Activated CD8-positive, alpha-beta T cell treated with anti-CD3 and anti-CD28 coated beads for 36 hours (primary cell): ENCODE measurements at regions of chr3 and their contacts with region 1.

Region 1: GRCh38 chr3:16511681-16512434 is 1.6 kb downstream of the RFTN1 start:
- DNase-seq: peak; percentile 95
- ATAC-seq: peak; percentile 69
- H3K4me3 Mint-ChIP-seq: peak overlapping the region; percentile 98
- H3K27ac Mint-ChIP-seq: peak overlapping the region; percentile 90
- H3K4me1 Mint-ChIP-seq: peaks cover 67% of the 10 kb centered on the region
- H3K27me3 Mint-ChIP-seq: no peaks in the 10 kb centered on the region
- CTCF ChIP-seq: no peak

Region 2: GRCh38 chr3:16300881-16301359 is 210.9 kb before region 1 on chr3:
- CTCF ChIA-PET with region 1: interaction called, 3 read pairs
- POLR2A ChIA-PET with region 1: interaction called, 20 read pairs
- intact Hi-C with region 1: no loop called
- DNase-seq: peak; percentile 69
- ATAC-seq: peak; percentile 64
- H3K4me3 Mint-ChIP-seq: peak overlapping the region; percentile 73
- H3K27ac Mint-ChIP-seq: peak overlapping the region; percentile 95
- H3K4me1 Mint-ChIP-seq: peaks cover 94% of the 10 kb centered on the region
- H3K27me3 Mint-ChIP-seq: no peaks in the 10 kb centered on the region
- CTCF ChIP-seq: no peak

Region 3: DNA sequence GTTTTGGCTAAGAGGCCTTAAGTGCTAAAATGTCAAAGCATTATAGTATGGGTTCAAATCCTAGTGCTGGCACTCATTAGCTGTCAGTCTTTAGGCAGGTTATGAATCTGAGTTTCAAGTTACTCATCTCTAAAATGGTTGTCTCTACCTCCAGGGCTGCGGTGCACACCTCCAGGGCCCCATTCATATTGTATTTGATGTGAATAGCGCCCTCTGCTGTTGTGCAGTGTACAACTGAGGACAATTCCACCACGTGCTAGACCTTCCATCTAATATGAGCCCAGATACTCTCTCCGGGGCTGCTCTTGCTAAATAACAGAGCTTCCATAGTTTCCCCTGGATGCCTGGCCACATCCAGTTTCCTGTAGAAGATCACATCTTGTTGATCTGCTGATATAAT is 192.6 kb before region 1 on chr3:
- CTCF ChIA-PET with region 1: interaction called, 9 read pairs
- POLR2A ChIA-PET with region 1: interaction called, 21 read pairs
- intact Hi-C with region 1: loop called (anchors 5 kb)
- DNase-seq: peak; percentile 97
- ATAC-seq: peak; percentile 92
- H3K4me3 Mint-ChIP-seq: peak overlapping the region; percentile 21
- H3K27ac Mint-ChIP-seq: peak overlapping the region; percentile 96
- H3K4me1 Mint-ChIP-seq: peaks cover 78% of the 10 kb centered on the region
- H3K27me3 Mint-ChIP-seq: no peaks in the 10 kb centered on the region
- CTCF ChIP-seq: peak; percentile 69

Region 4: GRCh38 chr3:16462679-16463078 is 49.2 kb before region 1 on chr3:
- CTCF ChIA-PET with region 1: no interaction called
- POLR2A ChIA-PET with region 1: interaction called, 6 read pairs
- intact Hi-C with region 1: loop called (anchors 5 kb)
- DNase-seq: peak; percentile 47
- ATAC-seq: peak; percentile 81
- H3K4me3 Mint-ChIP-seq: peak overlapping the region; percentile 0
- H3K27ac Mint-ChIP-seq: peak overlapping the region; percentile 70
- H3K4me1 Mint-ChIP-seq: peaks cover 65% of the 10 kb centered on the region
- H3K27me3 Mint-ChIP-seq: no peaks in the 10 kb centered on the region
- CTCF ChIP-seq: no peak

Region 5: GRCh38 chr3:16482770-16483531 is 28.9 kb before region 1 on chr3:
- CTCF ChIA-PET with region 1: no interaction called
- POLR2A ChIA-PET with region 1: interaction called, 12 read pairs
- intact Hi-C with region 1: no loop called
- DNase-seq: peak; percentile 71
- ATAC-seq: peak; percentile 90
- H3K4me3 Mint-ChIP-seq: peak overlapping the region; percentile 17
- H3K27ac Mint-ChIP-seq: peak overlapping the region; percentile 89
- H3K4me1 Mint-ChIP-seq: peaks cover 79% of the 10 kb centered on the region
- H3K27me3 Mint-ChIP-seq: no peaks in the 10 kb centered on the region
- CTCF ChIP-seq: no peak

Region 6: DNA sequence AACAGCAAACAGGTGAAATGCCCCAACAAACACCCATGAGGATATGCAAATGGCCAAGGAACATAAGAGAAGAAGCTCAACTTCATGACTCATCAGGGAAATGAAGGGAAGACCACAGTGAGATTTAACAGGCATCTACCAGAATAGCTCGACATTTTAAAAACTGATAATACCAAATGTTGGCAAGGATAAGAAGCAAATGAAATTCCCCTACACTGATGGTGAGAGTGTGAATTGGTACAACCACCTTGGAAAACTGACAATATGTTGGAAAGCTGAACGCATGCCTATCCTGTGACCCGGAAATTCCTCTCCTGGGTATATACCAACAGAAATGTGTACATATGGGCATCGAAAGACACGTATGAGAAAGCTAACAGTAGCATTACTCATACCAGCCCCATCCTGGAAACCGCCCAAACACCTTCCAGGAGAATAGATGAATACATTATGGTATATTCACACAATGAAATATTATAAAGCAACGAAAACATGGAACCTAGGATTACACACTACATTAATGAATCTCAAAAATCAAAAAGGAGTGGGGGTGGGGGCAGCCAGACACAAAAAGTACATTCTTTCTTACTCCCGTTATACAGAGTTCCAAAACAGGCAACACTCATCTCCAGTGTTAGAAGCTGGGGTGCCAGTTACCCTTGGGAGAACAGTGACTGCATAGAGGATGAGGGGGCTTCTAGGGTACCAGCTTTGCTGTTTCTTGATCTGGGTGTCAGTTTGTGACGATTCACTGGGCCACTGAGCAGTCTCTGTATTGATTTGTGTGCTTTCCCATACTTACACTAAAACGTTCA is 15.2 kb before region 1 on chr3:
- CTCF ChIA-PET with region 1: interaction called, 6 read pairs
- POLR2A ChIA-PET with region 1: interaction called, 24 read pairs
- intact Hi-C with region 1: no loop called
- DNase-seq: no peak
- ATAC-seq: peak; percentile 57
- H3K4me3 Mint-ChIP-seq: no peak overlapping the region
- H3K27ac Mint-ChIP-seq: peak overlapping the region; percentile 44
- H3K4me1 Mint-ChIP-seq: peaks cover 63% of the 10 kb centered on the region
- H3K27me3 Mint-ChIP-seq: no peaks in the 10 kb centered on the region
- CTCF ChIP-seq: no peak

Region 7: GRCh38 chr3:16550676-16551341 is 39.0 kb after region 1 on chr3:
- CTCF ChIA-PET with region 1: interaction called, 6 read pairs
- POLR2A ChIA-PET with region 1: interaction called, 3 read pairs
- intact Hi-C with region 1: loop called (anchors 5 kb)
- DNase-seq: peak; percentile 87
- ATAC-seq: peak; percentile 100
- H3K4me3 Mint-ChIP-seq: no peak overlapping the region
- H3K27ac Mint-ChIP-seq: peak overlapping the region; percentile 95
- H3K4me1 Mint-ChIP-seq: peaks cover 23% of the 10 kb centered on the region
- H3K27me3 Mint-ChIP-seq: peaks cover 5% of the 10 kb centered on the region
- CTCF ChIP-seq: peak; percentile 94